Naive thymus-derived CD4-positive, alpha-beta T cell (primary cell): ENCODE measurements at regions of chr7 and their contacts with region 1.

Region 1: DNA sequence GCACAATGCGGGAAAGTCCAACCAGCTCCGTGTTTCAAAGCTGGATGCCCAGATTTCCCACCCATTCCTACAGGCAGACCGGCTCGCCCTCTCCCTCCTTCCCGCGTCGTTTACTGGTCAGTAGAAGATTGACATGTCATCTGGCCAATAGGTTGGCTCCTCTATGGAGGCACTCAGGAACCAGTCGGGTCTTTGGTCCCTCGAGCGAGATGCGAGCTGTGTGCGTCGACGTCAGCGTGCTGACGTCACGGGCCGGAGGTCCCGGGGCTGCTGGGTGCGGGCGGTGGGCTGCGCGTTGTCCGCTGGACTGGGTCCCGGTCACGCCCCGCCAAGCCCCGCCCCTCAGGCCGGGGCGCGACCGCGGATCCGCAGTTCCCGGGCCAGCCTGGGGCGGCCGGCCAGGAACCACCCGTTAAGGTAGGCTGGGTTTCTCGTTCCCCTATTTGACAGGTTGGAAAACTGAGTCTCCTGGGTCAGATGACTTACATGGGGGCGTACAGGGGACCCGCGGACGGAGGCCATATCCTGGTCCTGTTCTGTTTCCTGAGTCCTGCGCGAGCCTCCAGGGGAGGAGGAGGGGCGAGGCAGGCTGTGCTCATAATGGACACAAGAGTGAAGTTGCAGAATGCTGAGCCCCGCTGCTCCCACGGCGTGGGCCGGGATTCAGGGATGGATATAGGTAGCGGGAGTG is at the start of gene STARD3NL:
- DNase-seq: peak; percentile 68 to 97 (median 88)
- ATAC-seq: peak; percentile 97
- H3K4me3 ChIP-seq: peak within 1 kb of the TSS; percentile 96
- H3K4me3 Mint-ChIP-seq: peak within 1 kb of the TSS; percentile 94 to 100 (median 99)
- H3K27ac ChIP-seq: peak within 1 kb of the TSS; percentile 84
- H3K27ac Mint-ChIP-seq: peak within 1 kb of the TSS; percentile 66 to 98 (median 97)
- H3K4me1 ChIP-seq: peaks cover 17 to 23% of the 10 kb centered on the region in 2 donors
- H3K4me1 Mint-ChIP-seq: peaks cover 21 to 50% (median 45%) of the 10 kb centered on the region in 7 donors
- H3K27me3 ChIP-seq: no peaks in the 10 kb centered on the region
- H3K27me3 Mint-ChIP-seq: peaks cover 3 to 14% (median 10%) of the 10 kb centered on the region in 5 donors
- total RNA-seq, gene STARD3NL: 9.4 to 22.0 (median 12.2) TPM

Region 2: DNA sequence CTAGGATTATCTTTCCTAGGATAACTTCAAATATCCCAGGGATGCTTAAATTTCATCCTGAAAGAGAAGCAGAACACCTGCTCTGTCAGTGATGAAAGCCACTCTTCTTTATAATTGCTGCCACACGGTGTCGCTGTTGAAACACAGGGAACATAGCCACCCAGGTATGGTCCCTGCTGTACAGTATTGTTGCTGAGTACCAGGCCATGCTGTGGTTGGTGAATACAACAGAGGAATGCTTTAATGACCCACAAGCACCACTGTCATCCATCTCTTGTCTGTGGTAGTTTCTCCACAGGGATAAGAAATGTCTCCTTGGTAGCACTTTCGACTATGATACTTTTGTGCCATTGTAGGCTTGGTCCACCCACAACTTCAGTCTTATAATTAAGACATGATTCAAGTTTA is 70.7 kb before region 1 on chr7:
- CTCF ChIA-PET with region 1: no interaction called
- POLR2A ChIA-PET with region 1: no interaction called
- intact Hi-C with region 1: loop called (anchors 2 kb)
- DNase-seq: peak; percentile 16 to 58 (median 44)
- ATAC-seq: peak; percentile 88
- H3K4me3 ChIP-seq: no peak overlapping the region
- H3K4me3 Mint-ChIP-seq: no peak overlapping the region
- H3K27ac ChIP-seq: no peak overlapping the region
- H3K27ac Mint-ChIP-seq: no peak overlapping the region
- H3K4me1 ChIP-seq: no peaks in the 10 kb centered on the region
- H3K4me1 Mint-ChIP-seq: peaks cover 0 to 2% (median 0%) of the 10 kb centered on the region in 7 donors
- H3K27me3 ChIP-seq: no peaks in the 10 kb centered on the region
- H3K27me3 Mint-ChIP-seq: peaks cover 18 to 43% (median 23%) of the 10 kb centered on the region in 5 donors

Region 3: DNA sequence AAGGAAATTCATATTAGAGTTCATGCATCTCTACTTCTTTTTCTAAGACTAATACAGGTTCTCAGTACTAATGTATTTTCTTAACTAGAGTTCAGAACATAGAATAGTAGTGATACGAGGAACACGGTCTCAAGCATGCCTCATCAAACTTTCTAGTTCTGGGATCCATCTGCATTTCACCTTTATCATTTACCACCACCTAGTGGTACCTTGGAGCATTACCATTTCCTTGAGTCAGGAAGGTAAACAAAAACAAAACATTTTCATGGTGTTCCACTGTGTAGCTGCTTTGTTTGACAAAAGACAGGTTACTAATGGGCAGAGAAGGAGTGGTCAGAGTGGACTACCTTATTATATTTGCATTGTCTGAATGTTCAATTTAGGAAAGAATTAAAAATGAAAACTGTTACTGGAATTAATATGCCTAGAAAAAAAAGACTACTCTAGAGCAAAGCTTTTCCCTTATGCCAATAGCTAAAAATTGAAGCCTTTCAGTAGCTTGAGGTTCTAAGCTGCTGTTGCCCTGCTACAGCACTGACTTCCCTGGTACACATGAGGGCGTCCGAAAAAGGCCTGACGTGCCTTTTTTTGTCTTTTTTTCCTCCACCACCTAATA is 44.4 kb after region 1 on chr7:
- CTCF ChIA-PET with region 1: interaction called, 4 read pairs
- POLR2A ChIA-PET with region 1: no interaction called
- intact Hi-C with region 1: loop called in 1 of 2 experiments (anchors 1 kb)
- DNase-seq: peak in 7 of 9 donors; percentile 34 to 68 (median 61)
- ATAC-seq: peak; percentile 80
- H3K4me3 ChIP-seq: no peak overlapping the region
- H3K4me3 Mint-ChIP-seq: peak overlapping the region in 1 of 10 donors; percentile 30
- H3K27ac ChIP-seq: no peak overlapping the region
- H3K27ac Mint-ChIP-seq: peak overlapping the region in 5 of 9 donors; percentile 0 to 39 (median 13)
- H3K4me1 ChIP-seq: peaks cover 0 to 70% of the 10 kb centered on the region in 2 donors
- H3K4me1 Mint-ChIP-seq: peaks cover 4 to 38% (median 7%) of the 10 kb centered on the region in 7 donors
- H3K27me3 ChIP-seq: no peaks in the 10 kb centered on the region
- H3K27me3 Mint-ChIP-seq: no peaks in the 10 kb centered on the region

Region 4: DNA sequence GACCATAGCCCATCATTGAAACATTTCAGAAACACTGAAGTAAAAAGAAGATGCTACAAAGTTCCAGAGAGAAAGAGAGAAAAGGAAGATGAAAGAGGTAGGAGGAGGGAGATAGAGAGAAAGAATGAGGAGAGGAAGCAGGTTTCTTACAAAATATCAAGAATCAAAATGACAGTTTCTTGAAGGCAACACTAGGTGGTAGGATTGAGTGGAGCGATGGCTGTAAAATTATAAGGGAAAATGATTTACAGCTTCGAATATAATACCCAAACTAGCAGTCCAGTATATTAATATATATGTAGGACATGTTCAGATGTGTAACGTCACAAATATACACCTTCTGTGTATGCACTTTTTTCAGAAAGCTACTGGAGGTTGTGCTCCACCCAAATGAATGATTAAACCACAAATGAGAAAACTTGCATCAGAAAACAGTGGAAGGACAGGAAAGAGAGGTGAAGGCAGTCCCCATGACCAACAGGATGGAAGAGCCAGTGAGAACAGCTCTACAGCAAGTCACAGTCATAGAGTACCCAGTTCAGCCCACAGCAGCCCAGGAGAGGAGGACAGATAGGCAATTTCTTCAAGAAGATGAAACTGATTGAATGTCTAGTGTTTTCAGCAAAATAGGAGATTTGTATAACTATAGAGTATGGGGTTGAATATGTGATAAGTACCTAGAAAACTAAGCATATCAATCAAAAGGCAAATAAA is 246.8 kb after region 1 on chr7:
- CTCF ChIA-PET with region 1: no interaction called
- POLR2A ChIA-PET with region 1: no interaction called
- intact Hi-C with region 1: loop called in 1 of 2 experiments (anchors 5 kb)
- DNase-seq: no peak
- ATAC-seq: no peak
- H3K4me3 ChIP-seq: no peak overlapping the region
- H3K4me3 Mint-ChIP-seq: peak overlapping the region in 9 of 10 donors; percentile 15 to 78 (median 61)
- H3K27ac ChIP-seq: peak overlapping the region; percentile 34
- H3K27ac Mint-ChIP-seq: peak overlapping the region in 8 of 9 donors; percentile 67 to 91 (median 85)
- H3K4me1 ChIP-seq: peaks cover 20 to 41% of the 10 kb centered on the region in 2 donors
- H3K4me1 Mint-ChIP-seq: peaks cover 28 to 64% (median 58%) of the 10 kb centered on the region in 7 donors
- H3K27me3 ChIP-seq: no peaks in the 10 kb centered on the region
- H3K27me3 Mint-ChIP-seq: peaks cover 0 to 10% (median 0%) of the 10 kb centered on the region in 5 donors

Region 5: GRCh38 chr7:39609113-39609934 is 1431.2 kb after region 1 on chr7:
- CTCF ChIA-PET with region 1: interaction called, 4 read pairs
- POLR2A ChIA-PET with region 1: no interaction called
- intact Hi-C with region 1: loop called in 1 of 2 experiments (anchors 10 kb)
- DNase-seq: peak in 4 of 9 donors; percentile 15 to 21 (median 18)
- ATAC-seq: peak; percentile 68
- H3K4me3 ChIP-seq: peak overlapping the region; percentile 22
- H3K4me3 Mint-ChIP-seq: peak overlapping the region; percentile 64 to 87 (median 76)
- H3K27ac ChIP-seq: no peak overlapping the region
- H3K27ac Mint-ChIP-seq: peak overlapping the region in 8 of 9 donors; percentile 13 to 81 (median 75)
- H3K4me1 ChIP-seq: peaks cover 0 to 22% of the 10 kb centered on the region in 2 donors
- H3K4me1 Mint-ChIP-seq: peaks cover 15 to 64% (median 56%) of the 10 kb centered on the region in 7 donors
- H3K27me3 ChIP-seq: no peaks in the 10 kb centered on the region
- H3K27me3 Mint-ChIP-seq: peaks cover 0 to 28% (median 19%) of the 10 kb centered on the region in 5 donors